Activated T-helper 1 cell treated with anti-CD3 and anti-CD28 coated beads, Interleukin-12 subunit alpha, Interleukin-12 subunit beta, Interleukin-2, Interleukin-4 antibody, amounts not matched to agents 30 ng/mL and 10 ng/mL and 1 ng/mL, durations not matched to agents 14 hours and 24 hours and 36 hours (primary cell): ENCODE measurements at regions of chr12 and their contacts with region 1.

Region 1: GRCh38 chr12:106581543-106582248 is 1.1 kb upstream of the RFX4 start:
- DNase-seq: no peak
- H3K4me3 Mint-ChIP-seq: no peak overlapping the region
- H3K27ac Mint-ChIP-seq: peak overlapping the region; percentile 11
- H3K4me1 Mint-ChIP-seq: peaks cover 8% of the 10 kb centered on the region
- H3K27me3 Mint-ChIP-seq: peaks cover 67% of the 10 kb centered on the region

Region 2: DNA sequence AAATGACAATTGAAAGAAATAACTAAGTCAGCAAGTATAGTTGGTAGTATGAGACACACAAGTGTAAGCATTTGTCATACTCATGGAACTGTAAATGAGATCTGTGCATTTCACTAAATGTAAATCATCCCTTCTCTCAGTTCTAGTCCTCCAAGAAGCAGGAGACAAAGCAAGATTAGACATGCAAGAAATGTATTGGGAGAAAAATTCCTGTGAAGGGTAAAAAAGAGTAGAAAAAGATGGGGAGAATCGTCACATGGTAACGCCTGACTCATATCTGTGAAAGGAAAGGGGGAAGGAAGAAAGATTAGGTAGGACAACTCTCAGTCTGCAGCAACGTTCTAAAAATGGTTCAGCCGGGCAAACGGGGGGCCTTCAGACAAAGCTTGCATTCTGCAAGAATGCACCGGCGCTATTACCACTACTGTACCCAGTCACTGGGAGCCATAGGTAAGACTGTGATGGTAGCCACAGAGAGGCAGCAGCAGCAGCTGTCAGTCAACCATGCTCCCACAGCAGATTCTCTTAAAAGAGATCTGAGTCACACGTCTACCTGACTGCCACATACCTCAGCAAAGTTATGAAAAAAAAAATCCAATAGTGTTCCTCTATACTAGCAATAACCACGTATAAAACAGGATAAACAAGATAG is 16.9 kb before region 1 on chr12:
- intact Hi-C with region 1: no loop called
- DNase-seq: no peak
- H3K4me3 Mint-ChIP-seq: no peak overlapping the region
- H3K27ac Mint-ChIP-seq: no peak overlapping the region
- H3K4me1 Mint-ChIP-seq: no peaks in the 10 kb centered on the region
- H3K27me3 Mint-ChIP-seq: peaks cover 14% of the 10 kb centered on the region

Region 3: DNA sequence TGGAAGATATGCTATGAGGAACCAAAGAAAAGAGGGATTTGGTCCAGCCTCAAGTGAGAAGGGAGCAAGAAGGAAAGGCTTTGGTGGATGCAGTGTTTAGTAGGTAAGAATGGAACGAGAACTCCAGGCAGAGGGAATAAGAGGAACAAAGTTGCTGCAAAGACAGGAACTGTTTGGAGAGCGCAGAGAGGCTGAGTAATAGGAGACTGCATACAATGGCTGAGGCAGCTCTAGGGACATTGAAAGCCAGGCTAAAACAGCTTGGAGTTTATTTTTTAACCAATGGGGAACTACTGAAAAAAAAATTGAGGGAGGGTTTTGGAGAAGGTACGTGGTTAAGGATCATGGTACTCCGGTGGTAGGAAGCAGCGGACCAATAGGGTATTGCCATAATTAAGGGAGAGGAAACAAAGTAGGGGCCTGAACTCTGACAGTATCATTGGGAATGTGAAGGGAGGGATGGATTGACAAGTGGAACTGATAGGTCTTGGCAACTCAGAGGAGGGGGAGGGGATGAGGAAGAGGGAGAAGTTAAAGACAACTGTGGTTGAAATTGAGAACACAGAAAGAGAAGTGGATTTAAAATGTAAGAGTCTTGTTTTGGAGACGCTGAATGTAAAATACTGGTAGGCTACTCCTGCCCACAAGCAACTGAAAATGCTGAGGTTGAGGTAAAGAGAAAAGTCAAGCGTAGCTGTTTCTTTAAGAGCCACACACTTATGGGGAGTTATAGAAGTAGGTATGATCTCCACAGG is 1197.6 kb after region 1 on chr12:
- intact Hi-C with region 1: loop called (anchors 10 kb)
- DNase-seq: no peak
- H3K4me3 Mint-ChIP-seq: no peak overlapping the region
- H3K27ac Mint-ChIP-seq: no peak overlapping the region
- H3K4me1 Mint-ChIP-seq: peaks cover 13% of the 10 kb centered on the region
- H3K27me3 Mint-ChIP-seq: peaks cover 53% of the 10 kb centered on the region

Region 4: GRCh38 chr12:107843351-107844311 is 1261.9 kb after region 1 on chr12:
- intact Hi-C with region 1: loop called (anchors 10 kb)
- DNase-seq: no peak
- H3K4me3 Mint-ChIP-seq: no peak overlapping the region
- H3K27ac Mint-ChIP-seq: no peak overlapping the region
- H3K4me1 Mint-ChIP-seq: no peaks in the 10 kb centered on the region
- H3K27me3 Mint-ChIP-seq: peaks cover 49% of the 10 kb centered on the region